AG04450 (cell line): ENCODE measurements at regions of chr5 and their contacts with region 1.

Region 1: DNA sequence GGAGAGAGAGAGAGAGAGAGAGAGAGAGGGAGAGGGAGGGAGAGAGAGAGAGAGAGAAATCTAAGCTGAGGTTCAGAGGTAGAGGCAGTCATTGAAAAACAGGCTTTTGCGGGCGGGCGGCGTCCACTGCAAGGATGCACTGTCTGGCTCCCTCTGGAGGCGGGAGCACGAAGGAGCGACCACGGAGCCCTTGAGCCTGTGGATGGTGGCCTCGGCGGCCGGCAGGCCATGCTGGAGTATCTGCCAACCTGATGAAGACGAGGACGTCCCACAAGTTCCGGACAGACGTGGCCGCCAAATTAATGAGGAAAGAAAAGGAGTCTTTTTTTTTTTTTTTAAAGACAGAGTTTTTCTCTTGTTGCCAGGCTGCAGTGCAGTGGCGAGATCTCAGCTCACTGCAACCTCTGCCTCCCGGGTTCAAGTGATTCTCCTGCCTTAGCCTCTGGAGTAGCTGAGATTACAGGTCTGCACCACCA is 2.2 kb upstream of the CCDC125 start:
- DNase-seq: peak; percentile 46
- H3K4me3 ChIP-seq: no peak overlapping the region
- H3K27ac ChIP-seq: no peak overlapping the region
- H3K27me3 ChIP-seq: no peaks in the 10 kb centered on the region
- CTCF ChIP-seq: peak; percentile 87

Region 2: GRCh38 chr5:69042915-69043658 is 291.7 kb before region 1 on chr5:
- CTCF ChIA-PET with region 1: interaction called, 21 read pairs
- POLR2A ChIA-PET with region 1: no interaction called
- DNase-seq: peak; percentile 89
- H3K4me3 ChIP-seq: peak overlapping the region; percentile 47
- H3K27ac ChIP-seq: no peak overlapping the region
- H3K27me3 ChIP-seq: no peaks in the 10 kb centered on the region
- CTCF ChIP-seq: peak; percentile 85

Region 3: DNA sequence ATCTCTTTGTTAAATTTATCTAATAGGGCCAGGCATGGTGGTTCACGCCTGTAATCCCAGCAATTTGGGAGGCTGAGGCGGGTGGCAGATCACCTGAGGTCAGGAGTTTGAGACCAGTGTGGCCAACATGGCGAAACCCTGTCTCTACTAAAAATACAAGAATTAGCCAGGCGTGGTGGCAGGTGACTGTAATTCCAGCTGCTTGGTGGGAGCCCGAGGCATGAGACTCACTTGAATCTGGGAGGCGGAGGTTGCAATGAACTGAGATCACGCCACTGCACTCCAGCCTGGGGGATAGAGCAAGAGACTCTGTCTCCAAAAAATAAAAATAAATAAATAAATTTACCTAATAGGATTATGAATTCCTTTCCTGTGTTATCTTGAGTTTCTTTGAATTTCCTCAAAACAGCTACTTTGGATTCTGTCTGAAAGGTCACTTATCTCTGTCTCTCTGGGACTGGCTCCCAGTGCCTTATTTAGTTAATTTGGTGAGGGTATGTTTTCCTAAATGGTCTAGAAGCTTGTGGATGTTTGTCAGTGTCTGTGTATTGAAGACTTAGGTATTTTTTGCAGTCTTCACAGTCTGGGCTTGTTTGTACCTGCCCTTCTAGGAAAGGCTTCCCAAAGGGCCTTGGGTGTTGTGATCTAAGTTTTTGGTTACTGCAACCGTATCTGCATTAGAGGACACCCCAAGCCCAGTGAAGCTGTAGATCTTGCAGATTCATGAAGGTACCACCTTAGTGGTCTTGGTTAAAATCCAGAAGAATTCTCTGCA is 186.1 kb before region 1 on chr5:
- CTCF ChIA-PET with region 1: no interaction called
- POLR2A ChIA-PET with region 1: no interaction called
- DNase-seq: no peak
- H3K4me3 ChIP-seq: no peak overlapping the region
- H3K27ac ChIP-seq: peak overlapping the region; percentile 11
- H3K27me3 ChIP-seq: no peaks in the 10 kb centered on the region
- CTCF ChIP-seq: no peak

Region 4: GRCh38 chr5:69271376-69271775 is 63.5 kb before region 1 on chr5:
- CTCF ChIA-PET with region 1: interaction called, 11 read pairs
- POLR2A ChIA-PET with region 1: no interaction called
- DNase-seq: no peak
- H3K4me3 ChIP-seq: no peak overlapping the region
- H3K27ac ChIP-seq: peak overlapping the region; percentile 48
- H3K27me3 ChIP-seq: no peaks in the 10 kb centered on the region
- CTCF ChIP-seq: no peak

Region 5: DNA sequence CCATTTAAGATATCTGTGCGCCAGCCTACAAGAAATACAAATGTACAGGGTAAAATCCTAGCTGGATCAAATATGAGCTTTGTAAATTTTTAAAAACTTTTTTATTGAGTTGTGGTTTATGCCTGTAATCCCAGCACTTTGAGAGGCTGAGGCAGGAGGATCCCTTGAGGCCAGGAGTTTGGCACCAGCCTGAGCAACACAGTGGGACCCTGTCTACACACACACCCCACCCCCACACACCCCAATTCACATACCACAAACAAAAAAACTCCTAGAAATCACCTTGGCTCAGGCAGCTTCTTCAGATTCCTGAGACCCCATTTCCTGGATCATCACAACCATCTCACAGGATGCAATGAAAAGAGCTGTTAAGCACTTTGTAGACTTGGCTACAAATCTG is 53.7 kb before region 1 on chr5:
- CTCF ChIA-PET with region 1: interaction called, 12 read pairs
- POLR2A ChIA-PET with region 1: no interaction called
- DNase-seq: no peak
- H3K4me3 ChIP-seq: no peak overlapping the region
- H3K27ac ChIP-seq: no peak overlapping the region
- H3K27me3 ChIP-seq: no peaks in the 10 kb centered on the region
- CTCF ChIP-seq: no peak

Region 6: GRCh38 chr5:69288688-69289087 is 46.1 kb before region 1 on chr5:
- CTCF ChIA-PET with region 1: interaction called, 23 read pairs
- POLR2A ChIA-PET with region 1: no interaction called
- DNase-seq: no peak
- H3K4me3 ChIP-seq: no peak overlapping the region
- H3K27ac ChIP-seq: no peak overlapping the region
- H3K27me3 ChIP-seq: no peaks in the 10 kb centered on the region
- CTCF ChIP-seq: no peak

Region 7: GRCh38 chr5:69418559-69418958 is 83.7 kb after region 1 on chr5:
- CTCF ChIA-PET with region 1: no interaction called
- POLR2A ChIA-PET with region 1: no interaction called
- DNase-seq: no peak
- H3K4me3 ChIP-seq: no peak overlapping the region
- H3K27ac ChIP-seq: no peak overlapping the region
- H3K27me3 ChIP-seq: no peaks in the 10 kb centered on the region
- CTCF ChIP-seq: no peak